PC-9 (cell line): ENCODE measurements at regions of chr21 and their contacts with region 1.

Region 1: DNA sequence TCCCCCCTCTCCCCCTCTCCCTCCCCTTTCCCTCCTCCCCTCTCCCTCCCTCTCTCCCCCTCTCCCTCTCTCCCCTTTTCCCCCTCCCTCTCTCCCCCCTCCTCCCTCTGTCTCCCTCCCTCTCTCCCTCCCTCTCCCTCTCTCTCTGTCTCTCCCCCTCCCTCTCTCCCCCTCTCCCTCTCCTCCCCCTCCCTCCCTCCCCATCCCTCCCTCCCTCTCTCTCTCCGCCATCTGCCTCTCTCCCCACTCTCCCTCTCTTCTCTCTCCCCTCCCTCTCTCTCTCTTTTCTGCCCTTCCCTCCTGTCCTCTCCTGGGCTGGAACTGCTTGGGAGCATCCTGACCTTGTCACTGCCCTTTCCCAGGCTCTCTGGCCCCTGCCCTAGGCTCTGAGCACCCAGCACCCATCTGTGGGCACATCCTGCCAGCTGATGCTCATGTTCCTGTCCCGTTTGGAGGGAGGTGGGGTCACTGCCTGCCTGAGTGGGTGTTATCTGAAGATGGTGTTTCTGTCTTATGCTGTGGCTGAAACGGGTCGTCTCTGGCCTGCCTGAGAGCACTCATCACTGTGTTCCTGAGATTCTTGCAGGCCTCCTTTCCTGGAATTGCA is 10.8 kb downstream of the FTCD start:
- DNase-seq: no peak
- H3K4me3 ChIP-seq: no peak overlapping the region
- H3K27ac ChIP-seq: no peak overlapping the region
- H3K4me1 ChIP-seq: no peaks in the 10 kb centered on the region; the same call in 1 of the 2 replicates
- H3K27me3 ChIP-seq: no peaks in the 10 kb centered on the region
- CTCF ChIP-seq: no peak

Region 2: GRCh38 chr21:45973659-45974072 is 170.9 kb before region 1 on chr21:
- CTCF ChIA-PET with region 1: interaction called, 5 read pairs
- POLR2A ChIA-PET with region 1: no interaction called
- intact Hi-C with region 1: loop called (anchors 2 kb)
- DNase-seq: peak in 1 of 2 experiments; percentile 43
- H3K4me3 ChIP-seq: no peak overlapping the region
- H3K27ac ChIP-seq: no peak overlapping the region
- H3K4me1 ChIP-seq: peaks cover 16% of the 10 kb centered on the region
- H3K27me3 ChIP-seq: no peaks in the 10 kb centered on the region
- CTCF ChIP-seq: peak; percentile 36; the same call in 1 of the 2 replicates

Region 3: GRCh38 chr21:45981151-45982089 is 163.1 kb before region 1 on chr21 and contains the start of gene COL6A1:
- CTCF ChIA-PET with region 1: no interaction called
- POLR2A ChIA-PET with region 1: interaction called, 11 read pairs
- intact Hi-C with region 1: no loop called
- DNase-seq: peak; percentile 65 to 66
- H3K4me3 ChIP-seq: peak within 1 kb of the TSS; percentile 79
- H3K27ac ChIP-seq: peak within 1 kb of the TSS; percentile 14; the same call in 1 of the 2 replicates
- H3K4me1 ChIP-seq: peaks cover 4% of the 10 kb centered on the region; the same call in 1 of the 2 replicates
- H3K27me3 ChIP-seq: no peaks in the 10 kb centered on the region
- CTCF ChIP-seq: no peak; the same call in 1 of the 2 replicates
- total RNA-seq, gene COL6A1: 43.1 and 51.8 TPM in 2 replicates

Region 4: DNA sequence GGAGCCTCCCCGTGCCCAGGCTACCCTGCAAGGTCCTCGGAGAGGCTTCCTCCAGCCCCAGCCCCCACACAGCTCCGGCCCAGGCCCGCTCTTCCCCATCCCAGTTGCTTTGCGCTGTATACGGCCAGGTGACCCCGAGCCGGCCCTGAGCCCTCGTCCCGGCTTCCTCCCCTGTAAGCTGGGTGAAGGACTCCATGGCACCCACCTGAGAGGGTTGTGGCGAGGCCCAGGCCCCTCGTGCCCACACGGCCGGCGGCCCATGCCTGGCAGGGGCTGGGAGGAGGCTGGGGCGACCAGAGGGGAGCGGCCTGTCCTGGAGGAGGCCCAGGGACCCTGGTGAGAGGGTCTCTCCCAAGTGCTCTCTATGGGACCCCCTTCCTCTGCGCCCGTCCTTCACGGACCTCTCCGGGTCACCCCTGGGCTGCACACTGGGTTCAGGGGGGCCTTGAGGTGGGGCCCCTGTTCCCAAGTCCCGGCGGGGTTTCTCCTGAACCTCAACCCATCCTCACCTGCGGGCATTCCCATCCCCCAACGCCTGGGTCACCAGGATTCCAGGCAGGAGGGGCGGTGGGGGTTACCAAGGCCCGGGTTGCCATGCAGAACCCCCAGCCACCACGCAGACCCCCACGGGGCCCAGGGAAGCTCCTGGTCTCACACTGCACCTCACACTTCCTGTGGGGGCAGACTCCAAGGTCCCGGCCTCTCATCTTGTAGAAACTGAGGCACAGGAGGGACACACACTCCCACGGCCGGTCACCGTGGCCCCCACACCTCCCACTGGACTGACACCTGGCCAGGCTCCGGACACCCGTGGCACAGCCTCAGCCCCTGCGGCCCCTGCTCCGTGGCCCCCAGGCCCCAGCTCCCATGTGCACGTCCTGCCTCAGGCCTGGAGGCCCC is 137.8 kb before region 1 on chr21:
- CTCF ChIA-PET with region 1: no interaction called
- POLR2A ChIA-PET with region 1: no interaction called
- intact Hi-C with region 1: no loop called
- DNase-seq: no peak
- H3K4me3 ChIP-seq: no peak overlapping the region
- H3K27ac ChIP-seq: no peak overlapping the region
- H3K4me1 ChIP-seq: no peaks in the 10 kb centered on the region
- H3K27me3 ChIP-seq: no peaks in the 10 kb centered on the region
- CTCF ChIP-seq: no peak

Region 5: GRCh38 chr21:46228345-46229051 is 83.9 kb after region 1 on chr21 and contains the start of gene LSS:
- CTCF ChIA-PET with region 1: no interaction called
- POLR2A ChIA-PET with region 1: no interaction called
- intact Hi-C with region 1: loop called (anchors 5 kb)
- DNase-seq: peak; percentile 83 to 97
- H3K4me3 ChIP-seq: peak within 1 kb of the TSS; percentile 71
- H3K27ac ChIP-seq: no peak within 1 kb of the TSS
- H3K4me1 ChIP-seq: peaks cover 28% of the 10 kb centered on the region
- H3K27me3 ChIP-seq: no peaks in the 10 kb centered on the region
- CTCF ChIP-seq: no peak
- total RNA-seq, gene LSS: 69.0 and 92.3 TPM in 2 replicates

Region 6: DNA sequence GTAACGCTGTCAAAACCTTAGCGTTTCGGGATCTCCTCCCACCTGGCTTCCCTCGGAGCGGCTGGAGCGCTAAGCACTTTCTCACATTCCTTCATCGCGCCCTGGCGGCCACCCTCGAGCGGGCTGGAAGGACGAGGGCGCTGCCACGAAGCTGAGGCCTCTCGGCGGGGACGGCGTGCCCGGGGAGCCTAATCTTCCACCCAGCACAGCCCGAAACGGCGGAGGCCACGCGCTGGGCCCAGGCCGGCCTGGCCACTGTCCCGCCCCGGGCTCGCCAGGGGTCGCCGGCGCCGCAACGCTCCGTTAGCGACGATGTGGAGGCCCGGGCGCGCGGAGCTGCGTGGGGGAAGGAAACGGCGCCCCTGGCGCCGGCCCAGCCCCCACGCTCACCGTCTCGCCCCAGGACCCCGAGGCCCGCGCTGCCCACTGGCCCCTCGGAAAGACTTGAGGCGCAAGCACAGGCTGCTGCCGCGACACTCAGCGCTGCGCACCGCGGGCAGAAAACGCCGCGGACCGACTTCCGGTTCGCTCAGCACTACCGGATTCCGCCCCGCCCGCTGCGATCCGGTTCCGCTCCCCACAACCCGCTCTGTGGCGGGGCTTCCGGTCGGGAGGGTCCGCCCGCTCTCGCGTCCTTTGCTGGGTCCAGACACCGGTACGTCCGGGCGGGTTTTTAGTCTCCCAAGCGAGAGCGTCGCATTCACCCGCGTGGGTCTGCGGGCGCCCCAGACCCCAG is 141.4 kb after region 1 on chr21 and contains the start of gene YBEY:
- CTCF ChIA-PET with region 1: no interaction called
- POLR2A ChIA-PET with region 1: no interaction called
- intact Hi-C with region 1: loop called (anchors 10 kb)
- DNase-seq: peak; percentile 74 to 86
- H3K4me3 ChIP-seq: peak within 1 kb of the TSS; percentile 69
- H3K27ac ChIP-seq: peak within 1 kb of the TSS; percentile 70
- H3K4me1 ChIP-seq: peaks cover 29% of the 10 kb centered on the region
- H3K27me3 ChIP-seq: no peaks in the 10 kb centered on the region
- CTCF ChIP-seq: no peak; the same call in 1 of the 2 replicates
- total RNA-seq, gene YBEY: 13.8 and 17.3 TPM in 2 replicates

Region 7: DNA sequence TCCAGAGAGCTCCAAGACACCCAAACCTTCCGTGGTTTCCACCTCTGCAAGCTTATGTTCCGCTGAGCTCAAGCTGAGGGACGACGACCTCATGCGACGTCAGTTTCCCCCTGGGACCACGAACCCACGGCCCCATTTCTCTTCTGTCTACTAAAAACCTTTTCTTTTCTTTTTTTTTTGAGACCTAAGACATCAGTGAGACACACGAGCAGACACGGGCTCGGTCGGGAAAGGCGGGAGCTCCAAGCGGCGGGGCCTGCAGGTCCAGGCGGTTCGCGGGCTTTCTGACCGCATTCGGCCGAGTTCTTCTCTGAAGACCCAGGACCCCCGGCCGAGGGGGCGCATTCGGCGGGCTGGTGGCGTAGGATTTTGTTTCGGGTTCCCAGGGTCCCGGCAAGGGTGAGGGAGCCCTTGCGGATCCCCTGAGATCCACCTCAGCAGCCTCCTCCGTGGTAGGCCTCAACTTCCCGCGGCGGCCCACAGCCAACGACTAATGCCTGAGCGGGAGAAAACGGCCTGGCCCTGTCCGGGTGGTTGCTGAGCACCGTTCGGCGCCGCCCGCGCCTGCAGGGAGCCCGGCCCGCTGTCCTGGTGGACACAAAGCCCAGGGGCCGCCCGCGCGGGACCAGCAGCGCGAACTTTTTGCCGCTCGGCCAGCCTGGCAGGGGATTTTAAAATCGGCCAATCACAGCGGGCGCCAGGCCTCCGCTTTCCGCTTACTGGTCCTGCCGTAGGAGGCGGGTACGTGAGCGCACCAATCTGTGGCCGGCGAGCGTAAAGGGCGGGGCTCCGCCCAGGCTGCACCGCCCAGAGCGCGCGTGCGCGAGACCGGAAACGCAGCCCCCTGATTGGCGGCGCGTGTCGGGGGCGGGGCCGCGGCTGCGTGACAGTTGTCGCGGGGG is 178.9 kb after region 1 on chr21 and contains the start of gene C21orf58:
- CTCF ChIA-PET with region 1: interaction called, 4 read pairs
- POLR2A ChIA-PET with region 1: no interaction called
- intact Hi-C with region 1: loop called (anchors 1 kb)
- DNase-seq: peak; percentile 86 to 96
- H3K4me3 ChIP-seq: peak within 1 kb of the TSS; percentile 98
- H3K27ac ChIP-seq: peak within 1 kb of the TSS; percentile 80
- H3K4me1 ChIP-seq: peaks cover 16% of the 10 kb centered on the region
- H3K27me3 ChIP-seq: no peaks in the 10 kb centered on the region
- CTCF ChIP-seq: no peak
- total RNA-seq, gene C21orf58: 28.9 and 30.7 TPM in 2 replicates